HCT116 (cell line): ENCODE measurements at regions of chr2 and their contacts with region 1.

Region 1: DNA sequence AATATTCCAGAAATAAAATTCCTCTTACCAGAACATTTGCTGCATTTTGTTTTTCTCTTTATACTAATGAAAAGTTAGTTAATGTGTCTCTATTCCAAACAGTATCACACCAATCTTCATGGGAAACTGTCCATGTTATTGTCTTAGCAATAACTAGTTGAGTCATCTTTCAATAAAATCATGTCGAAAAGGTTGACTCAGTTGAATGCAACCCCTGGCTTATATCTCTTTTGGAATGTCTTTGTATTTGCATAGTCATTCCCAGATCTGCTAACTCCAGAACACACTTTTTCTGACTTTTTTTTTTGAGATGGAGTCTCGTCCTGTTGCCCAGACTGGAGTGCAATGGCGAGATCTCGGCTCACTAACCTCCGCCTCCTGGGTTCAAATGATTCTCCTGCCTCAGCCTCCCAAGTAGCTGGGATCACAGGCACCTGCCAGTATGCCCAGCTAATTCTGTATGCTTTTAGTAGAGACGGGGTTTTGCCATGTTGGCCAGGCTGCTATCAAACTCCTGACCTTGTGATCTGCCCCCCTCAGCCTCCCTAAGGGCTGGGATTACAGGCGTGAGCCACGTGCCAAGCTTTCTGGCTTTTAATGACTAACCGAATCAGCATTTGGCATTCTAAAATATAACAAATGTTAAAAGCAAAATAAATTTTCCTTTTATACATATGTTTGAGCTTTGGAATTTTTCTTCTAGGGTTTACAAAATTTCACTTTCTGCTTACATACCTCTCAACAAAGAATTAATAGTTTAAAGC is 133.2 kb upstream of the GULP1 start:
- DNase-seq: no peak
- ATAC-seq: no peak
- H3K4me3 ChIP-seq: no peak overlapping the region
- H3K27ac ChIP-seq: no peak overlapping the region
- H3K4me1 ChIP-seq: no peaks in the 10 kb centered on the region
- H3K27me3 ChIP-seq: no peaks in the 10 kb centered on the region
- CTCF ChIP-seq: no peak
- POLR2A ChIP-seq: no peak
- RAD21 ChIP-seq: no peak

Region 2: GRCh38 chr2:188512456-188512855 is 353.9 kb after region 1 on chr2:
- CTCF ChIA-PET with region 1: no interaction called
- POLR2A ChIA-PET with region 1: no interaction called
- RAD21 ChIA-PET with region 1: no interaction called
- intact Hi-C with region 1: loop called (anchors 10 kb)
- DNase-seq: no peak
- ATAC-seq: peak; percentile 60
- H3K4me3 ChIP-seq: no peak overlapping the region
- H3K27ac ChIP-seq: no peak overlapping the region
- H3K4me1 ChIP-seq: peaks cover 0 to 7% of the 10 kb centered on the region in 2 experiments; a peak in 1 of 4 replicates
- H3K27me3 ChIP-seq: no peaks in the 10 kb centered on the region
- CTCF ChIP-seq: peak; percentile 42 to 71 (median 61); a peak in 5 of 6 replicates
- POLR2A ChIP-seq: no peak
- RAD21 ChIP-seq: peak; percentile 89